SK-N-SH (cell line): ENCODE measurements at regions of chr19 and their contacts with region 1.

Region 1: DNA sequence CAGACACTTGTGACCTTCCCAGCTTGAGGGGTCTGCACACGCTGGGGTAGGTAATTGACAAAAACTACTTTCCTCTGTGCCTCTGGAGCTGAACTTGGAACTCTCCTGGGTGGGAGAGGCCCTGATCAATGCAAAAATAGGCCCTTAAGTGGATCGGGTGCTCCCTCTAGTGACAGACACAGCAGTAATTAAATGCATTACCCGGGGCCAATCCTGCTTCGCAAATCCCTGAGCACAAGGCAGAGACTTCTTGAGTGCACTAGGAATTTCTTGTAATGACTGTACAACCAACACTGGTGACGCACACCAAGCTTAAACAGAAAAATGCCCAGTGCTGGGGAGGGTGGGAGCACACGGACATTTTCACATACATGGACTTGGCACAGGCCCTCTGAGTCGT is 10.6 kb upstream of the UBE2S start:
- DNase-seq: peak; percentile 83
- H3K4me3 ChIP-seq: no peak overlapping the region; a peak in 1 of 4 replicates
- H3K27ac ChIP-seq: no peak overlapping the region
- H3K4me1 ChIP-seq: no peaks in the 10 kb centered on the region
- H3K27me3 ChIP-seq: no peaks in the 10 kb centered on the region
- CTCF ChIP-seq: peak; percentile 82
- EP300 ChIP-seq: no peak
- RAD21 ChIP-seq: peak; percentile 93

Region 2: DNA sequence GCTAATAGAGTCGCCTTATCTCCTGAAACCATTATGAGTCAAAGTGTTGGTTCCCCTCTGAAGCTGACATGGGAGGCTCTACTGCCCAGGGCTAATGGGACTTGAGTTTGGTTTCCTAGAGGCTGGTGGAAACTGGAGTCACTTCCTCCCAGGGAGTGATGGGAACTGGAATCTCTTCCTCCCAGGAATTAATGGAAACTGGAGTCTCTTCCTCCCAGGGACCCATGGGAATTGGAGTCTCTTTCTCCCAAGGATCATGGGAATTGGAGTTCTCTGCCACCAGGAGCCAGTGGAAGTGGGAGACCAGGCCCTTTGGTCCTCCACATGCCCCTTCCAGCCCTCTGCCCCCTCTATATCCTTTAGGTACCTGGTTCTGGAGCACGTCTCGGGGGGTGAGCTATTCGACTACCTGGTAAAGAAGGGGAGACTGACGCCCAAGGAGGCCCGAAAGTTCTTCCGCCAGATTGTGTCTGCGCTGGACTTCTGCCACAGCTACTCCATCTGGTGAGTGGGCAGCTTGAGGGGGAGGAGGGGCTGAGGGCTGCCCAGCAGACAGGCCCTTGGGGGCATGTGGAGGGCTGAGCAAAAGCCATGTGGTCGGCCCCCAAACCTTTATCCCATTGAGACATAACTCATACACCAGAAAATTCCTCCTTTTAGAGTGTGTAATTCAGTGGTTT is 128.9 kb before region 1 on chr19:
- CTCF ChIA-PET with region 1: interaction called, 19 read pairs
- POLR2A ChIA-PET with region 1: no interaction called
- DNase-seq: peak; percentile 33
- H3K4me3 ChIP-seq: no peak overlapping the region
- H3K27ac ChIP-seq: no peak overlapping the region
- H3K4me1 ChIP-seq: peaks cover 0 to 7% of the 10 kb centered on the region in 2 experiments; a peak in 1 of 4 replicates
- H3K27me3 ChIP-seq: no peaks in the 10 kb centered on the region
- CTCF ChIP-seq: no peak
- EP300 ChIP-seq: no peak
- RAD21 ChIP-seq: no peak

Region 3: DNA sequence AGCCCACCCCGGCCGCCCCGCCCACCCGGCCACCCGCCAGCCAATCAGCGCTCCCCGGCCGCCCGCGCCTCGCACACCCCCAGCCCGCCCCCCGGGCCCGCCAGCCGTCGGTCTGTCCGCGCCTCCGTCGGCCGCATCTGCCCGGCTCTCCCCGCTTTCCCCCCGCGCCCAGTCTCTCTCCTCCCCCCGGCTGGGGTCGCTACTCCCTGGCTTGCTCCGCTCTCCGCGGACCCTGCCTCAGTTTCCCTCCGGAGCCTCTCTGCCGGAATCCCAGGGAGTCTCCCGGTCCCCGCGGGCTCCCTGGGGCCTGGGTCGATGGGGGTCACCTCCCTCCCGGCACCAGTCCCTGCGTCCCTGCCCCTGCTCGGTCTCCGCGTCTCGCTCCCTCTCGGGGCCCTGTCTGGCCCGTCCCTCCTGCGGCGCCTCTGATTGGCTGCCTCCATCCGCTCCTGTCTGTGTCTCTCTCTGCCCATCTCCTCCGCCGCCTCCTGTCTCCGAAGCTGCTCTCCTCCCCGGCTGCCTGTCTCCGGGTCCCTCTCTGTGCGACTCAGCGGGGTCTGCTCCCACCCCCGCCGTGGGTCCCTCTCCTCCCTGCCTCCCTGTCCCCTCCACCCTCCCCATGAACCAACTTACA is 48.4 kb before region 1 on chr19:
- CTCF ChIA-PET with region 1: no interaction called
- POLR2A ChIA-PET with region 1: no interaction called
- DNase-seq: peak; percentile 96
- H3K4me3 ChIP-seq: peak overlapping the region; percentile 57 to 79
- H3K27ac ChIP-seq: peak overlapping the region; percentile 11 to 88; a peak in 3 of 4 replicates
- H3K4me1 ChIP-seq: peaks cover 26 to 28% of the 10 kb centered on the region in 2 experiments; a peak in 3 of 4 replicates
- H3K27me3 ChIP-seq: no peaks in the 10 kb centered on the region
- CTCF ChIP-seq: no peak
- EP300 ChIP-seq: no peak
- RAD21 ChIP-seq: no peak

Region 4: DNA sequence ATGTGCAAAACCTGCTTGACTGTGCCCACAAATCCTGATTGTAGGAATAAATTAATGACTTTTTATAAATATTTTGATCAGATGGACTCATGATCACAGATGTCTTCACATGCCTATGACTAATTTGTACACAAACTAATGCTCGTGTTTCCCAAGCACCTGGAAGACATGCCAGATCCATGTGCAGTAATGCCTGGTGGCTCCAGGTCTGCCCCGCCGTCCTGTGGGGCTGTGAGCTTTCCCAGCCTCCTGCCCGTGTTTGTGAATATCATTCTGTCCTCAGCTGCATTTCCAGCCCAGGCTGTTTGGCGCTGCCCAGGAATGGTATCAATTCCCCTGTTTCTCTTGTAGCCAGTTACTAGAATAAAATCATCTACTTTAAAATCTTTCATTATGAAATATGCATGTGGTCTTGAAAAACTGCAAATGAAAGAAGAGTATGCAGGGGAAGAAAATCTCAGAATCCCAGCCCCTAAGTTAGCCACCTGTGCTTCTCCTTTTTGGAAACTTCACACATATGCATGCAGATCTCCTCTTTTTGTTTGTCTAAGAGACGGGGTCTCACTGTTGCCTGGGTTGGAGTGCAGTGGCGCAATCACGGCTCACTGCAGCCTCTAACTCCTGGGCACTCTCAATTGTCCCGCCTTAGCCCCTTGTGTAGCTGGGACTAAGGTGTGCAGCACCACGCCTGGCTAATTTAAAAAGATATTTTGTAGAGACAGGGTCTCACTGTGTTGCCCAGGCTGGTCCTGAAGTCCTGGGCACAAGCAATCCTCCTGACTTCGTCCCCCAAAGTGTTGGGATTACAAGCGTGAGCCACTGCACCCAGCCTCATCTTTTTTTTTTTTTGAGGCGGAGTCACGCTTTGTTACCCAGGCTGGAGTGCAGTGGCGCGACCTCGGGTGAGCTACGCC is 26.2 kb before region 1 on chr19:
- CTCF ChIA-PET with region 1: interaction called, 12 read pairs
- POLR2A ChIA-PET with region 1: no interaction called
- DNase-seq: peak; percentile 25
- H3K4me3 ChIP-seq: no peak overlapping the region
- H3K27ac ChIP-seq: no peak overlapping the region
- H3K4me1 ChIP-seq: peaks cover 19 to 40% of the 10 kb centered on the region in 2 experiments; a peak in 3 of 4 replicates
- H3K27me3 ChIP-seq: no peaks in the 10 kb centered on the region
- CTCF ChIP-seq: no peak
- EP300 ChIP-seq: no peak
- RAD21 ChIP-seq: no peak

Region 5: DNA sequence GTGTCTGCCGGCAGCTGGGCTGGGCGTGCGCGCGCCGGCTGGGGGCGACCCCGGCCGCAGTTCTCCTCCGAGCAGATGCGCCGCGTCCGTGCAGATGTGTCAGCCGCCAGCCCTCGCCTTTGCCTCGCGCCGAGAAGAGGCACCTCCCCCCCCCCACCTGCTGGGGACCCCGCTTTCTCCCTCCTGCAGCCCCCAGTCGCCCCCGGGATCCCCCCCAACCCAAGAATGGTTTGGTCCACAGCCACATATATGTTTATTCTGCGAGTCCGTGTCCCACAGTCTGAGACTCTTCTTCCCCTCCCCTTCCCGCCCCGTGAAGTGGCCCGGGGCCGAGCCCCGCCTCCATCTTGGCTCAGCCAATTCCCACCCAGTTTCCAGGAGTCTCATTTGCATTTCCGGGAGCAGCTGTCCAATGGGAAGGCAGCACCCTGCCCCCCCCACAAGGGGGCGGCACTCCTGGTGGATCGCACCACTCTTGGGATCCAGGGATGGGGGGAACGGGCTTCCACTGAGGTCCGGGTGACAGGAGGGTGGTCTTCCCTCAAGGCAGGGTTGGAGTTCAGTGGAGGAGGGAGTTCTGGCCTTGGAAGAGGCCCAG is 34.7 kb after region 1 on chr19:
- CTCF ChIA-PET with region 1: interaction called, 14 read pairs
- POLR2A ChIA-PET with region 1: no interaction called
- DNase-seq: peak; percentile 98
- H3K4me3 ChIP-seq: peak overlapping the region in 1 of 2 experiments; percentile 36; a peak in 2 of 4 replicates
- H3K27ac ChIP-seq: no peak overlapping the region
- H3K4me1 ChIP-seq: peaks cover 0 to 13% of the 10 kb centered on the region in 2 experiments; a peak in 2 of 4 replicates
- H3K27me3 ChIP-seq: peaks cover 11% of the 10 kb centered on the region
- CTCF ChIP-seq: no peak; the same call in 1 of the 2 replicates
- EP300 ChIP-seq: no peak
- RAD21 ChIP-seq: no peak

Region 6: DNA sequence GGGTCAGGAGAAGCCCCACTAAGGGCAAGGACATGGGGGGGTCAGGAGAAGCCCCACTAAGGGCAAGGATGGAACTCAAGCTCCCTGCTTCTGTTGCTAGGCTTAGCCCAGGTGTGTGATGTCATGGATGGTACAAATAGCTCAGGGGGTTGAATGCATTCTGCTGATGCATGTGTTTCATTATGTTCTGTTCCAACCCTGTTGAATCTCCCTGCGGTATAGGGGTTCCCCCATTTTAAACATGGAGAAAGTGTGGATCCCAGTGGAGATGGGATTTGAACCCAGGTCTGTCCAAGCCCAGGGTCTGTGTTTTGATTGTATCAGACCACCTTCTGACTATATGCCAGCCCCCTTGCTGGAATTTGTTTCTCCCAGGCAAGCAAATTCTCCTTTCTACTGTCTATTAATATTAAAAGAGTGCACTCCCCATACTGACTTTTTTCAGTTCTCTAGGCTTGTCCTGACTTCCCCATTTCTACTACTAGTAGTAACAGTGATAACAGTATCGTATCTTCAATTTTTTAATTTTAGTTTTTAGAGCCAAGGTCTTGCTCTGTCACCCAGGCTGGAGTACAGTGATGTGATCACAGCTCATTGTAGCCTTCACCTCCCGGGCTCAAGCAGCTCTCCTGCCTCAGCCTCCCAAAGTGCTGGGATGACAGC is 193.9 kb after region 1 on chr19:
- CTCF ChIA-PET with region 1: no interaction called
- POLR2A ChIA-PET with region 1: no interaction called
- DNase-seq: no peak
- H3K4me3 ChIP-seq: no peak overlapping the region
- H3K27ac ChIP-seq: no peak overlapping the region
- H3K4me1 ChIP-seq: no peaks in the 10 kb centered on the region; a peak in 1 of 4 replicates
- H3K27me3 ChIP-seq: no peaks in the 10 kb centered on the region
- CTCF ChIP-seq: no peak
- EP300 ChIP-seq: no peak
- RAD21 ChIP-seq: no peak